Activated CD4-positive, alpha-beta T cell treated with anti-CD3 and anti-CD28 coated beads for 36 hours (primary cell): ENCODE measurements at regions of chr10 and their contacts with region 1.

Region 1: GRCh38 chr10:84147347-84147746 is 8.0 kb downstream of the GHITM start:
- DNase-seq: no peak
- ATAC-seq: no peak
- H3K4me3 Mint-ChIP-seq: no peak overlapping the region
- H3K27ac Mint-ChIP-seq: no peak overlapping the region
- H3K4me1 Mint-ChIP-seq: peaks cover 16% of the 10 kb centered on the region
- H3K27me3 Mint-ChIP-seq: no peaks in the 10 kb centered on the region

Region 2: GRCh38 chr10:84214612-84215235 is 67.4 kb after region 1 on chr10:
- CTCF ChIA-PET with region 1: interaction called, 61 read pairs
- POLR2A ChIA-PET with region 1: interaction called, 3 read pairs
- intact Hi-C with region 1: no loop called
- DNase-seq: peak; percentile 68
- ATAC-seq: peak; percentile 88
- H3K4me3 Mint-ChIP-seq: peak overlapping the region; percentile 18
- H3K27ac Mint-ChIP-seq: no peak overlapping the region
- H3K4me1 Mint-ChIP-seq: no peaks in the 10 kb centered on the region
- H3K27me3 Mint-ChIP-seq: peaks cover 5% of the 10 kb centered on the region

Region 3: GRCh38 chr10:84256510-84257342 is 109.4 kb after region 1 on chr10:
- CTCF ChIA-PET with region 1: interaction called, 9 read pairs
- POLR2A ChIA-PET with region 1: no interaction called
- intact Hi-C with region 1: loop called in 1 of 2 experiments (anchors 5 kb)
- DNase-seq: peak; percentile 80
- ATAC-seq: peak; percentile 86
- H3K4me3 Mint-ChIP-seq: no peak overlapping the region
- H3K27ac Mint-ChIP-seq: no peak overlapping the region
- H3K4me1 Mint-ChIP-seq: peaks cover 5% of the 10 kb centered on the region
- H3K27me3 Mint-ChIP-seq: peaks cover 9% of the 10 kb centered on the region